ENCODE measurements at regions of chr3 and their contacts with region 1.

Region 1: GRCh38 chr3:112642912-112643506 is 2.1 kb upstream of the CCDC80 start:
- DNase-seq: peak; percentile 70 to 87
- H3K4me3 ChIP-seq: no peak overlapping the region
- H3K27ac ChIP-seq: 0 out of 2 replicates have a peak overlapping the region, but pooled peaks have one; percentile 16
- H3K4me1 ChIP-seq: peaks cover 76% of the 10 kb centered on the region
- H3K27me3 ChIP-seq: no peaks in the 10 kb centered on the region
- CTCF ChIP-seq: peak; percentile 91

Region 2: DNA sequence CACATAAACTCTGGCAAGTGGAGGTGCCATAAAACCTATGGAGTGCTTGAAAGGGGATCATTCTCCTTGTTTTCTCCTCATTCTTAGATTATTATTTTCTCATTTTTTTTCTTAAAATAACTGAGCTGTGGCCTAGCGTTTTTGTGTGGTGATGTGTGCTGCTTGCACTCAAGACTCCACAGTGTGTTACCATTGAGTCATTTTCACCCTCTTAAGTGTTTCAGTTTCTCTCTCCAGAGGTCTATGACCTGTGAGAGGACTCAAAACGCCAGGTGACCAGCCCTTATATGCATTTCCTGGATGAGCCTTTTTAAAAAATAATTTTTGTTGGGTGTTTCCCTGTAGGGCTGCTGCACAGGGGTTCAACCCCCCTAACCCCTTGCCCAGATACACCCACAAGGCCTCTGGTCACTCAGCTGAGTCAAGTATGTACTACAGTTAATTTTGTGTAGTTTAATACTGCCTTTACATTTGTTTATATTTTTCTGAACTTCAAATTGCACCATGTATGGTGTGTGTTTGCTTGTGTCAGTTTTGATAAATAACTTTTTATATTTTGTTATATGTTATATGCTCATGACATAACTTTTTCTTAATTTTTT is 128.4 kb before region 1 on chr3:
- CTCF ChIA-PET with region 1: no interaction called
- POLR2A ChIA-PET with region 1: no interaction called
- intact Hi-C with region 1: no loop called
- DNase-seq: no peak
- H3K4me3 ChIP-seq: no peak overlapping the region
- H3K27ac ChIP-seq: no peak overlapping the region
- H3K4me1 ChIP-seq: no peaks in the 10 kb centered on the region
- H3K27me3 ChIP-seq: no peaks in the 10 kb centered on the region
- CTCF ChIP-seq: no peak

Region 3: GRCh38 chr3:112604536-112604935 is 38.5 kb before region 1 on chr3:
- CTCF ChIA-PET with region 1: no interaction called
- POLR2A ChIA-PET with region 1: interaction called, 3 read pairs
- intact Hi-C with region 1: loop called (anchors 1 kb)
- DNase-seq: peak; percentile 27 to 52
- H3K4me3 ChIP-seq: no peak overlapping the region; the same call in 1 of the 2 replicates
- H3K27ac ChIP-seq: peak overlapping the region; percentile 30; the same call in 1 of the 2 replicates
- H3K4me1 ChIP-seq: peaks cover 10% of the 10 kb centered on the region; the same call in 1 of the 2 replicates
- H3K27me3 ChIP-seq: no peaks in the 10 kb centered on the region
- CTCF ChIP-seq: no peak

Region 4: GRCh38 chr3:112676659-112677234 is 33.7 kb after region 1 on chr3:
- CTCF ChIA-PET with region 1: interaction called, 5 read pairs
- POLR2A ChIA-PET with region 1: interaction called, 20 read pairs
- intact Hi-C with region 1: loop called (anchors 1 kb)
- DNase-seq: peak; percentile 53 to 86
- H3K4me3 ChIP-seq: no peak overlapping the region
- H3K27ac ChIP-seq: peak overlapping the region; percentile 87
- H3K4me1 ChIP-seq: peaks cover 57% of the 10 kb centered on the region
- H3K27me3 ChIP-seq: no peaks in the 10 kb centered on the region
- CTCF ChIP-seq: no peak

Region 5: DNA sequence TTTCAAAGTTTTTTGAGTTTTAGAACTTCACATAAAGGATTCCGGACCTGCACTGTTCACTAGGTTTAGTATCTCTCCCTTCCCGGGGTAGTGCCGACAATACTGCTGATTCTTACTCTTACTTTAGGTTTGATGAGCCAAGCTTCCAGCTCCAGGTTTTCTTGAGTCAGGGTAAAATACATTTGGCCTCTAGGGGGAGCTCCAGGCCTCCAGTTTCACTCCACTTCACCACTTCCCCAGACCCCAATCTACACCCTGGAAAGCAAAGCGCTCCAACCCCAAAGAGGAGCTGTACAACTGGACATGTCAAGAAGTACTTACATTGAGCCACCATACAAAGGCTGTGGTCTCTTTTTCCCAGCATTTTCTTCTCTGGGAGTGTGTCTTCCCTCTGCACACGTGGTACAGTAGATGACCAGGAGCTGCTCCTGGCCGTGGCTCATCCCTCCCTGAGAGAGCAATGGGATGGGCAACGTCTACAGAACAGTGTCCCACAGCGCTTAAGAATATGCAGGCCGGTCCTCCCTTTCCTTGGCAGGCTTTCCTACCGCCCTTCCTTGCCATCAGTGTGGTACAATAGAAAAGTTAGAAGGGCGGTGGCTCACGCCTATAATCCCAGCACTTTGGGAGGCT is 91.8 kb after region 1 on chr3:
- CTCF ChIA-PET with region 1: interaction called, 16 read pairs
- POLR2A ChIA-PET with region 1: interaction called, 4 read pairs
- intact Hi-C with region 1: loop called (anchors 1 kb)
- DNase-seq: peak; percentile 44 to 63
- H3K4me3 ChIP-seq: no peak overlapping the region
- H3K27ac ChIP-seq: no peak overlapping the region
- H3K4me1 ChIP-seq: peaks cover 58% of the 10 kb centered on the region
- H3K27me3 ChIP-seq: no peaks in the 10 kb centered on the region
- CTCF ChIP-seq: peak; percentile 86

Region 6: DNA sequence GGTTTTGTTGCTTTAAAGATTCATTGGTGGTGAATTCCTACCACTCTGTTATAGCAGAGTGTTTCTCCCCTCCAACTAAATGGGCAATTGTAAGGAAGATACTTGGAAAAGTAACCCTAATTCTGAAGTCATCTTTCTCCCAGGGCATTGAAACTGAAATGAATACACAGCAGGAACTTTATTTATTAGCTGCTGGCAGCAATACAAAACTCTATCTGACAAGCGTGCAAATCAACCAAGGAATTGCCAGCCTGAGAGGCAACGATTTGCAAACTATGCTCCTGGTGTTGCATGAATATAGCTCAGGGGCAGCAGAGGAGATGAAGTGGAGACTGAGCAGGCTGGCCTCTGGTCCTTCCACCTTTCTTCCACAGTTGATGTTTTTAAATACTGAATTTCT is 283.0 kb after region 1 on chr3:
- CTCF ChIA-PET with region 1: no interaction called
- POLR2A ChIA-PET with region 1: no interaction called
- intact Hi-C with region 1: no loop called
- DNase-seq: no peak
- H3K4me3 ChIP-seq: no peak overlapping the region
- H3K27ac ChIP-seq: no peak overlapping the region
- H3K4me1 ChIP-seq: no peaks in the 10 kb centered on the region
- H3K27me3 ChIP-seq: no peaks in the 10 kb centered on the region
- CTCF ChIP-seq: no peak

Region 7: DNA sequence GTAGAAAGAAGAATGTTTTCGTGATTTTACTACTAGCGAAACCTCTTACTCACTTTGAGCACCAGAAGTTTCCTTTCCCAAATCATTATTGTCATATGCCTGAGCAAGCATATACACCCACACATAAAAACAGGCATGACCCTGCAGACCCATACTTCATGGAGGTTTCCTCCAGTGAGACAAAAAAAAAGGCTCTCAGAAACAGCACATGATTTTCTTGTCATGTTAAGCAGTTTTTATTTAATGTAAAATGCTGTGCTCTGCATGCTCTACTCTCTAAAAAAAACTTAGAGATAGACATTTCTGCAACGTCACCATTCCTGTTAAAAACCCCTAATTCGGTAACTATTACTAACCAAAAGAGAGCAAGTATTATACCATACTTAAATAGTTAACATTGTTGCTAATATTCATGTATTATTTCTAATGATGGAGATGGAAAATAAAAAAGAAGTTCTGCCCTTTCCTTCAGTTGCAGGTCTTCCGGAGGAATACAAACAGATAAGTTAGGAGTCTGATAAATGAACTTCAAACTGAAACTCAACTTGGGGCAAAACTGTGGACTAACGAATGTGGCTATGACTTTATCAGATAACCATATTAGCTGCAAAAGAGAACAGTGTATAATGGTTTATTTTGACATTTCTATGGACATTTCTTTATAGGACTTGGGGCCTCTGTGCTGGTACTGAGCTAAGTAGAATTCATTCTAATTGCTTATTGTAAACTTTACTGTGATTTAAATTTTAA is 316.0 kb after region 1 on chr3:
- CTCF ChIA-PET with region 1: no interaction called
- POLR2A ChIA-PET with region 1: no interaction called
- intact Hi-C with region 1: no loop called
- DNase-seq: no peak
- H3K4me3 ChIP-seq: no peak overlapping the region
- H3K27ac ChIP-seq: no peak overlapping the region
- H3K4me1 ChIP-seq: no peaks in the 10 kb centered on the region
- H3K27me3 ChIP-seq: no peaks in the 10 kb centered on the region
- CTCF ChIP-seq: no peak

Region 8: DNA sequence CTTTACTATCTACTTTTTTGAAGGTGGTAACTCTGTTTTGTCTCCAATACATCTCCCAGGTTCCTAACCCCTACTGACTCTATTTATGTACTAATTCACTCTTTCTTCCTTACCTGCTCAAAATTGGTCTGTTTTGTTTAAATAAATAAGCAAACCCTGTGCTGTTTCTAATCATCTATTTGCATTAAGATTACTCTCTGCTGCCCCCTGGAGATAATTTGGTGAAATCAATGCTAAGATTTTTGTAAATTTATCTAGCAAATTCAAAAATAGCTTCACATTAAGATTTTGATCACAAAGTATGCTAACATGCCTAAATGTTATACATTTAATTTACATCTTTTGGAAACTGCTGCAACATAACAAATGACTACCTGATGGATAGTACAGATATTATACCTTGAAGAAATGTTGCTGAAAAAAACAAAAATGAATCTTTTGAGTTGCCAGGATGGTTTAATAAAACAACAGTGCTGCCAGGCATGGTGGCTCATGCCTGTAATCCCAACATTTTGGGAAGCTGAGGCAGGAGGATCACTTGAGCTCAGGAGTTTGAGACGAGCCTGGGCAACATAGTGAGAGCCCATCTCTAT is 336.3 kb after region 1 on chr3:
- CTCF ChIA-PET with region 1: no interaction called
- POLR2A ChIA-PET with region 1: no interaction called
- intact Hi-C with region 1: loop called (anchors 1 kb)
- DNase-seq: no peak
- H3K4me3 ChIP-seq: no peak overlapping the region
- H3K27ac ChIP-seq: no peak overlapping the region
- H3K4me1 ChIP-seq: peaks cover 2% of the 10 kb centered on the region
- H3K27me3 ChIP-seq: no peaks in the 10 kb centered on the region
- CTCF ChIP-seq: peak; percentile 87

Region 9: DNA sequence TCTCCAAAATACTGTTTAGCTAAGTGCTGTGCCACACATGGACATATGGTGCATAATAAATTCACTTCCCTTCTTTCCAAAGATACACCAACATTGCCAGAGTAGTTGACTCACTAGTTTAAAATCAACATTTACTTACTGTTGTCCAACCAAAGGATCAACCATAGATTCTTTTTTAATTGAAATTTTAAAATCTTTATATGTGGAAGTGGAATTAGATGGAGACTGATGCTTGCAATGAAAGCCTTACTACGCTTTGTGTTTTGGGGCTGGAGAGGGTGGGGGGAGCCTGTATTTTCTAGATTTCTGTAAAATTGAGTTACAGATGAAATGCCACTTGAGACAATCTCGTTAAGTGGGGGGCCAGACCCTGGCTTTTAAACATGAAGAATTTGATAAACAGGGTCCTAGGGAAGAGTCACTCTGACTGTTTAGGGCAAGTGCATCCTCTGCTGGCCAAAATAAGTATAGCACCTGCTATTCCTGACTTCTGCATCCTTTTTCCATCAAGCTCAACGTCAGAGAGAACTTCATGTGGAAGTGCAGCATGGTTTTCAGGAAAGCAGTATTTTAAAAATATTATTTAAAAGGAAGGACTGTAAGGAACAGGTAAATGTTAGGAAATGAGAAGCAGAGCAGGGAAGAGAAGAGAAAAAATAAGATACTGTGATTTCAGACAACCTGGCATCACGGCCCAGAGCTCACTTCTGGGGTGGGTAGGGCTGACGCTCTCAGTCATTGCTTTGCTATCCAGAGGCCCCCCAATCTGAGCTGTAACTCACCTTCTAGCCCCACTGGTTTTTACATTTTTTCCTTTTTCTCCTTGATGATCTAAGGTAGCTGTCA is 645.0 kb after region 1 on chr3:
- CTCF ChIA-PET with region 1: no interaction called
- POLR2A ChIA-PET with region 1: no interaction called
- intact Hi-C with region 1: loop called (anchors 1 kb)
- DNase-seq: peak in 1 of 2 experiments; percentile 54
- H3K4me3 ChIP-seq: no peak overlapping the region
- H3K27ac ChIP-seq: peak overlapping the region; percentile 54
- H3K4me1 ChIP-seq: peaks cover 12% of the 10 kb centered on the region
- H3K27me3 ChIP-seq: no peaks in the 10 kb centered on the region
- CTCF ChIP-seq: peak; percentile 99